Activated naive CD4-positive, alpha-beta T cell treated with anti-CD3 and anti-CD28 coated beads for 36 hours (primary cell): ENCODE measurements at regions of chr5 and their contacts with region 1.

Region 1: GRCh38 chr5:68433923-68434879 is 218.6 kb downstream of the PIK3R1 start:
- DNase-seq: peak; percentile 97
- H3K4me3 Mint-ChIP-seq: peak overlapping the region; percentile 23
- H3K27ac Mint-ChIP-seq: peak overlapping the region; percentile 73
- H3K4me1 Mint-ChIP-seq: peaks cover 51% of the 10 kb centered on the region
- H3K27me3 Mint-ChIP-seq: peaks cover 12% of the 10 kb centered on the region

Region 2: DNA sequence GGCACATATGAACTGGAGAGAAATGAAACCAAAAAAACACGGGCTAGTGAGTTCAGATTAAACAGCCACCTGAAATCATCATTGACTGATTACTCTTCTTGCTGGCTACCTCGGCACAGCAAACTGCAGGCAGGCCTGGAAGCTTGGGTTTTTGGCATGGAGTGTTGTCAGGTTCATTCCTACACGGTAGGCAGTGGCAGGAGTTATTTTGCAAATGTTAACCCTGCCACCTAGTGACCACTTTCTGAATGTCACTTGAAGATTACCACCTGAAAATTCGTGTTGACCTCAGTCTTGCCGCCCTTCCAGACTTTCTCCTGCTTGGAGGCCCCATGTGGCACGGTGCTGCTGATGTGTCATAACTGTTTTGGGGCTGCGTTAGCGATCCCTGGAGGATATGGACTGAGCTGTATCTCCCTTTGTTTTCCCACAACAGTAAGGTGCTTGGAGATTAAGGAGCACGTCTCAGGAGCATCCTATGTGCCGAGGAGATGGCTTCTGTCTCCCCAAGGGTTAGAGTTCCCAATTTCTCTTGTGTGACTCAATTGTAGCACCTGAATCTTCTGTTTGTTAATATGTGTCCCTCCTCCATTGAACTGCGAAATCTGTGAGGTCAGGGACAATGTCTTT is 1224.9 kb before region 1 on chr5:
- CTCF ChIA-PET with region 1: no interaction called
- intact Hi-C with region 1: loop called (anchors 1 kb)
- DNase-seq: peak; percentile 79
- H3K4me3 Mint-ChIP-seq: no peak overlapping the region
- H3K27ac Mint-ChIP-seq: peak overlapping the region; percentile 50
- H3K4me1 Mint-ChIP-seq: peaks cover 56% of the 10 kb centered on the region
- H3K27me3 Mint-ChIP-seq: no peaks in the 10 kb centered on the region

Region 3: GRCh38 chr5:68272289-68272688 is 161.9 kb before region 1 on chr5:
- CTCF ChIA-PET with region 1: no interaction called
- intact Hi-C with region 1: loop called (anchors 1 kb)
- DNase-seq: no peak
- H3K4me3 Mint-ChIP-seq: no peak overlapping the region
- H3K27ac Mint-ChIP-seq: peak overlapping the region; percentile 36
- H3K4me1 Mint-ChIP-seq: peaks cover 82% of the 10 kb centered on the region
- H3K27me3 Mint-ChIP-seq: no peaks in the 10 kb centered on the region

Region 4: DNA sequence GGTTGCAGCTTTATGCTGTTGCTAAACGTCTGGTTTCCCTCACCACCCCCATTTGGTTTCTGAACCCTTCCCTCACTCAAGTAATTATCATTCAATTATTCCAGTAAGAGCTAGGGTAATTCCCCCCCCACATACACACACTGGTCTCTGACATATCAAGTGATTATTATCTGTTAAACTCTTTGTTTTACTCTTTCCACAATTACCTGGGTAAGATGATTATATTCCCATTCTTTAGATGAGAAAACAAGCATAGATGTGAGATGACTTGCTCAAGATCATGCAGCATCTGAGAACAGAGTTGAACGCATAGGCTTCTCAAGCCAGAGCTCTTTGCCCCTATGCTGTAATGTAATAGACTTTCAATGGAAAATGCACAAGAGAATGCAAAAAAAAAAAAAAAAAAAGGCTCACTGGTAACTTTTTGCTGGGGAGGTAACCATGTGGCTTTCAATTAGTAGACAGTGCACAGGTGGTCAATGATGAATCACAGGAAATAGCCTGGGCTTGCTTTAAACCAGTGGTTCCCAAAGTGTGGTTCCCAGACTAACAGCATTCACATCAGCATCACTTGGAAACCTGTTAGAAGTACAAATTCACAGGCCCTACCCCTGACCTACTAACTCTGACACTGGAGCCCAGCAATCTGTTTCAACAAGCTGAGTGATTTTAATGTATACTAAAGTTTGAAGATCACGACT is 131.0 kb before region 1 on chr5:
- CTCF ChIA-PET with region 1: no interaction called
- intact Hi-C with region 1: loop called (anchors 1 kb)
- DNase-seq: no peak
- H3K4me3 Mint-ChIP-seq: no peak overlapping the region
- H3K27ac Mint-ChIP-seq: peak overlapping the region; percentile 51
- H3K4me1 Mint-ChIP-seq: peaks cover 30% of the 10 kb centered on the region
- H3K27me3 Mint-ChIP-seq: no peaks in the 10 kb centered on the region

Region 5: DNA sequence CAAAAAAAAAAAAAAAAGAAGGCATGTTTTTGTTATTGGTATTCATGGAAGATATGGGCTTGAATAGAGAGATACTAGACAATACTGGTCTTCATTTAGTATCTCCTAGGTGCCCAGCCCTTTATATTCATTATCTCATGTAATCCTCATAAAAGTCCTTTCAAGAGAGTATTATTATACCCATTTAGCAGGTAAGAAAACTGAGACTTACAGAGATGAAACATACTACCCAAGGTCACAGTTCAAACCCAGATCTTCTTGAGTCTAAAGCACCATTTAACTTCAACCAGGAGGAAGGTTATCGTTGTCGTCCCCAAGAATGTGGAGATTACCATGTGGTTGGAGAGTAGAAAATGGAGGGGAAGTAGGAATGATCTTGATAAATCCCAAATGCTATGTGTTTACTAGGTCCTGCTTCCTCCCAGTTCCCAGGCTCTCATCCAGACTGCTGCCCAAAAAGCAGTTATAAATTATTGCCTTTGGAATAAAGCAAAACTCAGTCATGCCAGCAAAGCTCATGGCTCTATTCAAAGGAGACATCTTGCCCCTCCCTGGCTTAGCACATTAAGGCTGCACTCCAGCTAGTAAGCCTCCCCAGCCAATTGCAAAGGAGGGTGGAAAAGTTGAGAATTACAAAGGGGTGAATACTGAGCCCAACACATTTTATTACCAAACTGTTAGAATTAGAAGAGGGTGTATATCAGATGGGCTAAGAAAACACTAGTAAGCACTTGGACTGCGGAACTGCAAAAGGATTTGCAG is 54.7 kb before region 1 on chr5:
- CTCF ChIA-PET with region 1: no interaction called
- intact Hi-C with region 1: loop called (anchors 1 kb)
- DNase-seq: no peak
- H3K4me3 Mint-ChIP-seq: no peak overlapping the region
- H3K27ac Mint-ChIP-seq: no peak overlapping the region
- H3K4me1 Mint-ChIP-seq: peaks cover 17% of the 10 kb centered on the region
- H3K27me3 Mint-ChIP-seq: peaks cover 2% of the 10 kb centered on the region